ENCODE measurements at regions of chr20 and their contacts with region 1.

Region 1: GRCh38 chr20:31879143-31879987 is 8.9 kb downstream of the TTLL9 start:
- DNase-seq: peak; percentile 66
- H3K4me3 ChIP-seq: peak overlapping the region; percentile 71
- H3K27ac ChIP-seq: no peak overlapping the region
- H3K4me1 ChIP-seq: peaks cover 5% of the 10 kb centered on the region
- CTCF ChIP-seq: no peak

Region 2: DNA sequence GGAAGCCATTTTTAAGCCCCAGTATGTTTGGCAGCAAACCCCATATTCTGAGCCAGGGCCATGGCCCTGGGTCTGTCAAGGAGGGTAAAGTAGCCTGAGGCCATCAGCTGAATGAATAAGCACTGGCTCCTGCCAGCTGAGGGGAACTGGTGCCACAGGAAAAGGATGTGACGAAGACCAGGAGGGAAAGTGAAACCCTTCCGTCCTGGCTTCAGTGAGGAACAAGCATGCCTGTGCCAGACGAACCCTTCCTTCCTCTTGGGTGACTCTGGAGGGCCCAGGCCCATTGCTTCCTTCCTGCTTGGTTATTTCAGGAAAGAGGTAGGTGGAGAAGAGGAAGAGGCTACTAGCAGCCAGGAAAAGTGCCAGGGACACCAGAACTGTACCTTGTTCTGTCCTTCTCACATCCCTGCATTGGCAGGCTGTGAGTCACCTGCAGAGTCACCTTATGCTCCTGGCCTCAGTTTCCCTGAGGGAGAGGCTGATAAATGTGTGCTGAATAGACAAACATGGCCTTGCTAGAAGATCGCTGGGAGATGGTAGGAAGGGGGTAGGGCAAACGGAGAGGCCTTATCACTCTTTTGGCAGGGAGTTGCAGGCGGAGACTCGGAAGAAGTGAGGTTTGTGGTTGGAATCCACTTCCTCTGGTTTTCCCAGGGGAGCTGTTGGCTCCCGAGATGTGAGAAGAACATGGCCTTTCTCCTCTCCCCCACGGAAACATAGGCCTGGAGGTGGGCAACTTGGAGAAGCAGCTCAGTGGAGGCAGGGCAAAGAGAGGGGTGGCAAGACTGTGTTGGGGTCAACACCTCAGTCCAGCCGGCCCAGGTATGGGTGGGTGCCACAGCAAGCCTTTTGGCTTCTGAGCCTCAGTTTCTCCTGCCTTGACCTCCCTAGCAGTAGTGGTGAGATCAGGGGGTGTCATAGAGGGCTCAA is 204.2 kb before region 1 on chr20:
- CTCF ChIA-PET with region 1: no interaction called
- POLR2A ChIA-PET with region 1: no interaction called
- intact Hi-C with region 1: no loop called
- DNase-seq: peak; percentile 72
- H3K4me3 ChIP-seq: peak overlapping the region; percentile 58
- H3K27ac ChIP-seq: peak overlapping the region; percentile 81
- H3K4me1 ChIP-seq: peaks cover 68% of the 10 kb centered on the region
- CTCF ChIP-seq: no peak

Region 3: DNA sequence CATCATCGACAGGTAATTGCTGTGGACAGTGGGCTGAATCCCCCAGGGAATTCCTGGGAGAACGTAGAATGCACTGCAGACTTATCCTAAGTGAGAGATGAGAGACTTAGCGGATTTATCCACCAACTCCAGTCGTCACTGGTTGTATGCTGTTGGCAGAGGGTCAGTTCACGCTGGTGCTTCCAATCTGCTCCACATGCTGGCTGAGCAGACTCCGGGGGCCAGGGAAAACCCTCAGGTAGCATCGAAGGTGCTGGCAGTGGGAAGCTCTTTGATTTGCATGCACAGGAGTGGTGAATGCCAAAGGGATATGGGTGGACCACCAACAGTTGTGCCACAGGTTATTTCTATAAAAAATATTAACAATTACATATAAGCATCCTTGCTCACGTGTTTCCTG is 11.3 kb after region 1 on chr20:
- CTCF ChIA-PET with region 1: no interaction called
- POLR2A ChIA-PET with region 1: interaction called, 12 read pairs
- intact Hi-C with region 1: no loop called
- DNase-seq: no peak
- H3K4me3 ChIP-seq: no peak overlapping the region
- H3K27ac ChIP-seq: no peak overlapping the region
- H3K4me1 ChIP-seq: peaks cover 9% of the 10 kb centered on the region
- CTCF ChIP-seq: no peak